Motor neuron (in vitro differentiated cells): ENCODE measurements at regions of chr7 and their contacts with region 1.

Region 1: DNA sequence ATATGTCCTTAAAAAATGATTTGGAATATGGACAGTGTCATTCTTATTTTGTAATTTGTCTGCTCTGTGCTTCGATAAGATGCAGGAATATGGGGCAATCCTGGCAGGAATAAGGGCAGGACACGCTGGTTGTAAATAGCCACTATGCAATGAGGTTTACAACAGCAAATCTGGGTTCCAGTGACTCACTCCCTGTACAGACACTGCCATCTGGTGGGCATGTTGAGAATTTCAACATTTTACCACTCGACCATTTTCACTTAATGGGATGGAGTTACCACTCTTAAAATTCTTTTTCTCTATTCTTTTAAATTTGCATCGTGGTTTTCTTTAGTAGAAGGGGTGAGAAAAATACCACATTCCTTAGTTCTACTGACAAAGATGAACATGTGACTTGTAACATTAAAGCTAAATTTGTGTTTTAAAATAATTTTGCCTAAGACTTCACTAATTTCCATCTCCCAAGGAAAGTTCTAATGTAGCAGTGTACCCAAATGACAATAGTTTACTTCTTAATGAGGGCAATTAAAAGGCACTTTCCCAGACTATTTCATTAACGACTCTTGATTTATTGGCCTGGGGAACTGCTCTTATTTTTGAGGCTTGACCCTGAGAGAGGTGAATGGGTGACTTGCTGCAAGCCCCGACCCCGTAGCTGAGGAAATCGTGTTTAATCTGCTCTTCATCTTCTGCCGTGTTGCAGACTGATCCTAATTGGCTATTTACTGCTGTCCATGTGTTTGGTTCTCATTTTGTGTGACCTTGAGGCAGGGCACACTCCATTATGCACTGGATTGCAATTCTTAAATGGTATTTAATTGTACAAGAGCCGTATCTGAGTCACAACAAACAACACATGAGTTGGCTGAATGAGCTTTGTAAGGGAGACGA is 173.6 kb upstream of the IMMP2L start:
- ATAC-seq: peak; percentile 45 to 81 (median 72)
- H3K4me3 ChIP-seq: no peak overlapping the region
- H3K27ac ChIP-seq: no peak overlapping the region
- H3K4me1 ChIP-seq: peaks cover 0 to 12% of the 10 kb centered on the region in 2 donors

Region 2: DNA sequence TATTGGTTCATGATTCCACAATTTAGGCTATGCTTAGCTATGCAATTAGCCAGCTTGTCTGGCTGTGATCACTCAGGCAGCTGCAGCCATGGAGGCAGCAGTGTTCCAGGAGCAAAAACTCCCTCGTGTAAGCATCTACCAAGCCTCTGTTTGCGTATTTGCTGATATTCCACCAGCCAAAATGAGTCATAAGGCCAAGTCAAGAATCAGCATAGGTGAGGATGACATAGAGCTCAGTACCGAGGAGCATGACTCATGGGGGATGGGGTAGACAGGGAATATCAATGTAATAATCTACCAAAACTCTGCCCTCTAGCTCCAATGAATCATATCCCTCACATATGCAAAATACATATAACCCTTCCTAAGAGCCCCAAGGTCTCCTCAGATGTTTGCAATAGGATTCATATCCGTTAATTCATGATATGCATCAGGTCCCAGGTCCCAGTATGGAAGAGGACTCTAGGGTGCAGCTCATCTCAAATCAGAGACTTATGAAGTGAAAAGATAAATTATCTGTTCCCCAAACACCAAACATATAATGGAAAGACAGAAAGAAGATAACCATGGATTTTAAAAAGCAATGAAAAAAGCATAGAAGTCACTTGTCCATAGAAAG is 236.8 kb before region 1 on chr7:
- in situ Hi-C with region 1: loop called in 1 of 9 experiments (anchors 10 kb)
- ATAC-seq: peak; percentile 65 to 99 (median 90)
- H3K4me3 ChIP-seq: no peak overlapping the region
- H3K27ac ChIP-seq: no peak overlapping the region
- H3K4me1 ChIP-seq: no peaks in the 10 kb centered on the region

Region 3: GRCh38 chr7:113209449-113210203 is 1473.7 kb after region 1 on chr7:
- in situ Hi-C with region 1: no loop called
- ATAC-seq: peak in 7 of 8 experiments; percentile 45 to 77 (median 63)
- H3K4me3 ChIP-seq: no peak overlapping the region
- H3K27ac ChIP-seq: no peak overlapping the region
- H3K4me1 ChIP-seq: no peaks in the 10 kb centered on the region